ENCODE measurements at regions of chr1 and their contacts with region 1.

Region 1: DNA sequence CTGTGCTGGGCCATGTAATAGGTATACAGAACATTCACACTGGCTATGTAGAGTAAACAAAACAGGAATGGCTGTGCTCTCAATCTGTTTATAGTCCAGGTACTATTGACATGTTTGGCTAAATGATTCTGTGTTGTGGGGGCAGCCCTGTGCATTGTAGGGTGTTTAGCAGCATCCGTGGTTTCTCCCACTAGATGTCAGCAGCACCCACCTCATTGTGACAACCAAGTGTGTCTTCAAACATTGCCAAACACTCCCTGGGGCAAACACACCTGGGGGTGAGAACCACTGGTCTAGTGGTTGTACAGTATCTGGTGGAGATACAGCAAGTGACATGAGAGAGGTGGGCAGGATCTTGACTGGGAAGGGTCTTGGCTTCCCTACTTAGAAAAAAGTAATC is 80.4 kb upstream of the SPATA6 start:
- DNase-seq: no peak
- ATAC-seq: peak; percentile 77
- H3K4me3 ChIP-seq: no peak overlapping the region
- H3K27ac ChIP-seq: no peak overlapping the region
- H3K4me1 ChIP-seq: no peaks in the 10 kb centered on the region
- H3K27me3 ChIP-seq: no peaks in the 10 kb centered on the region
- CTCF ChIP-seq: peak; percentile 10 to 46 (median 46); a peak in 4 of 6 replicates
- EP300 ChIP-seq: no peak
- POLR2A ChIP-seq: no peak
- RAD21 ChIP-seq: peak; percentile 50

Region 2: DNA sequence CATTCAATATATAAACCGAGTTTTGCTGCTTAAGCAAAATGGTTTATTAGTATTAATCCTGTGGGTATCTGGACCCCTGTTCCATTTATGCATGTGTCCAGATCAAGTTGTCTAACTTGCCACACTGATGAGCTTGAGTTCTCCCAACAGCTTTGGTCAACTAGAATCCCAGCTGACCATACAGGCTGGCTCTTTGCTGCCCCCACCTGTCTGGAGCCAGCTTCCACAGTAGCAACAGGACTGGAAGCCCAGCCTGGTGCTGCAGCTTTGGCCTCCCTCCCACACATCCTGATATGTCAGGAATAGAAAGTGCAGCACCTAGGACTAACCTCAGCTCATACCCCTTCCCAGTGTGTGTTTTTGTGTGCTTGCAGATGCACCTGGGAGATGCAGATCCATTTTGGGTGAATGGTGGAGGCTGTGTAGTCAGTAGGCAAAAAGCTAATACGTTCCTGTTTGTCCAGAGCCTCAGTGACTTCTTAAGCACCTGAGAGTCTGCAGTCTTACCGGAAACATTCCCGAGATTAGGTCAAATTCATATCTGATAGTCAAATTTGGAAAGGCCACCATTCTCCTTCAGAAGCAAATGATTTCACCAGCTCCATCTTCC is 265.2 kb after region 1 on chr1:
- CTCF ChIA-PET with region 1: interaction called, 3 read pairs
- POLR2A ChIA-PET with region 1: no interaction called
- RAD21 ChIA-PET with region 1: no interaction called
- SMC1A ChIA-PET with region 1: no interaction called
- in situ Hi-C with region 1: no loop called
- intact Hi-C with region 1: loop called (anchors 5 kb)
- DNase-seq: no peak
- ATAC-seq: peak; percentile 83
- H3K4me3 ChIP-seq: no peak overlapping the region
- H3K27ac ChIP-seq: no peak overlapping the region
- H3K4me1 ChIP-seq: no peaks in the 10 kb centered on the region
- H3K27me3 ChIP-seq: no peaks in the 10 kb centered on the region
- CTCF ChIP-seq: peak; percentile 66 to 78 (median 77)
- EP300 ChIP-seq: no peak
- POLR2A ChIP-seq: no peak
- RAD21 ChIP-seq: peak; percentile 81

Region 3: DNA sequence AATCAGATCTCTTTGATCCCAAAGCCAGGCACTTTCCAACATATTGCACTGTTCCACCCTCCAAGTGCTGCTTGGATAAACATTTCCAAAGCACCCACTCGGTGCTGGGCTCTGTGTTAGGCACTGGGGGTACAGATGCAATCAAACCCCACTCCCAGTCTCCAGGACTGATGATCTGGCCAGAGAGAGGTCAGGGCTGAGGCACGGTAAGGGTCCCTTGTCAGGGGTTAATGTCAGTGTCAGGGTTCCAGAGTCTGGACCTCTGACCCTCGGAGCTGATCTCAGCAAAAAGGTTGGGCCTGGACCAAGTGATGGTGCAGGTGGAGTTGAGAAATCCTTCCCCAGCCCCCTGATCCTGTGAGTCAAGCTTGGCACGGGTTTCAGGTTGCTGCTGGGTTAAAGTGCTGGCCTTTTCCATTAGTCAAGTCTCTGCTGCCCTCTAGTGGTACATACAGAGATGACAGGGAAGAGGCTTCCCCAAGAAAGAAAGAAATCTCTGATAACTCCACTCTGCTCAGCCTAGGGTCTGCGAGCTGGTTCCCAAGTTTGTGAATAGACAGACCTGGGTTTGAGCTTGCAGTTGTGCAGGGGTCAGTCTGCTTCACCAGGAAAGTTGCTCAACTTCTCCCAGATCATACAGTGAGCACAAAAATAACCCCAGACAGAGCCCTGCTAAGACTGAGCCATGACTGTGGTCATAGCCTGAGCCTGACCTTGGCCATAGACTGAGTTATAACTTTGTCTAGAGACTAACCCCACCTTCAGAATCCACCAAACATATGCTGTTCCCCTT is 1796.2 kb after region 1 on chr1:
- CTCF ChIA-PET with region 1: no interaction called
- POLR2A ChIA-PET with region 1: no interaction called
- RAD21 ChIA-PET with region 1: no interaction called
- SMC1A ChIA-PET with region 1: no interaction called
- in situ Hi-C with region 1: loop called (anchors 10 kb)
- intact Hi-C with region 1: no loop called
- DNase-seq: no peak
- ATAC-seq: peak; percentile 91
- H3K4me3 ChIP-seq: no peak overlapping the region
- H3K27ac ChIP-seq: no peak overlapping the region
- H3K4me1 ChIP-seq: no peaks in the 10 kb centered on the region
- H3K27me3 ChIP-seq: no peaks in the 10 kb centered on the region
- CTCF ChIP-seq: peak; percentile 75 to 86 (median 83)
- EP300 ChIP-seq: no peak
- POLR2A ChIP-seq: no peak
- RAD21 ChIP-seq: peak; percentile 84

Measured in GM12878 (cell line).